ENCODE measurements at regions of chr9 and their contacts with region 1.

Region 1: GRCh38 chr9:127916665-127917613 is at the start of gene ST6GALNAC4:
- DNase-seq: peak; percentile 90 to 94 (median 91)
- H3K4me3 ChIP-seq: peak within 1 kb of the TSS; percentile 54 to 92 (median 55)
- H3K4me3 Mint-ChIP-seq: peak within 1 kb of the TSS; percentile 81 to 86
- H3K27ac ChIP-seq: peak within 1 kb of the TSS; percentile 85 to 93
- H3K27ac Mint-ChIP-seq: peak within 1 kb of the TSS; percentile 81 to 100 (median 97)
- H3K4me1 ChIP-seq: peaks cover 56 to 66% of the 10 kb centered on the region in 2 donors
- H3K4me1 Mint-ChIP-seq: peaks cover 64% of the 10 kb centered on the region
- H3K27me3 ChIP-seq: peaks cover 0 to 3% of the 10 kb centered on the region in 2 donors
- H3K27me3 Mint-ChIP-seq: peaks cover 3 to 13% (median 7%) of the 10 kb centered on the region in 3 donors
- CTCF ChIP-seq: no peak
- polyA plus RNA-seq, gene ST6GALNAC4: 8.9 to 14.0 (median 10.3) TPM

Region 2: DNA sequence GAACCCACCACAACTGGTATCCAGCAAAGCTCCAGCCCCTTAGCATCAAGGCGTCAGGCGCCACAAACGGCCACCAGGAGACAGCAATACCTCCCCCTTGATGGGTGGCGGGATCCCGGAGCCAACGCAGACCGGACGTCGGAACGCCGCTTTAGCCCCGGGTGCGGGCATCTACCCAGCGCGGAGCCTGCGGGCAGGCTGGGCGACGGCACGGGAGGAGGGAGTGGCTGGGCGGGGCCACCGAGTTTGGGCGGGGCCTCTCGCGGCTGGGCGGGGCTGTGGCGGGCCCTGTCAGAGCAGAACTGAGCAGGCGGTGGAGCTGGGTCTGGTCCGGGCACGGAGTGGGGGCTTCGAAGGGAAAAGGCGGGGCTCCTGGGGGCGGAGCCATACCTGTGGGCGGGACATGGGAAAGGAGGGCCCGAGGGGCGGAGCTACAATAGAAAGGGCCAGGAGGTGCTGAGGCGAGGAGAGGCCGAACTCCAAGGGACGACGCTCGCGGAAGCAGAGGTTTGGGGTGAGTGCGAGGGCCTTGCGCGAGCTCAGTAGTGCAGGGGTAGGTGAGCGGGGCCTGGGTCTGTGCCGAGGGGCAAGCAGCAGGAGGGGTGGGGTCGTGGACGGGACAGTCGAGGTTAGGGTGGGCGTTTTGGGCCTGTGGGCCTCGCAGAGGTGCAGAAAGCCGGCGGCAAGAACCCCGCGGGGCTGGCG is 692.6 kb before region 1 on chr9:
- intact Hi-C with region 1: loop called in 1 of 2 experiments (anchors 5 kb)
- DNase-seq: peak; percentile 63 to 75 (median 72)
- H3K4me3 ChIP-seq: peak overlapping the region; percentile 28 to 77 (median 50)
- H3K4me3 Mint-ChIP-seq: peak overlapping the region; percentile 81 to 85
- H3K27ac ChIP-seq: peak overlapping the region in 1 of 2 donors; percentile 39
- H3K27ac Mint-ChIP-seq: peak overlapping the region in 6 of 7 donors; percentile 76 to 91 (median 82)
- H3K4me1 ChIP-seq: peaks cover 17 to 25% of the 10 kb centered on the region in 2 donors
- H3K4me1 Mint-ChIP-seq: peaks cover 21% of the 10 kb centered on the region
- H3K27me3 ChIP-seq: peaks cover 15 to 35% of the 10 kb centered on the region in 2 donors
- H3K27me3 Mint-ChIP-seq: peaks cover 37 to 51% (median 43%) of the 10 kb centered on the region in 3 donors
- CTCF ChIP-seq: no peak

Region 3: GRCh38 chr9:127561619-127562500 is 355.1 kb before region 1 on chr9:
- intact Hi-C with region 1: loop called in 1 of 2 experiments (anchors 5 kb)
- DNase-seq: peak; percentile 97 to 99 (median 98)
- H3K4me3 ChIP-seq: peak overlapping the region in 1 of 3 experiments; percentile 62
- H3K4me3 Mint-ChIP-seq: peak overlapping the region; percentile 63 to 80
- H3K27ac ChIP-seq: peak overlapping the region; percentile 75 to 94
- H3K27ac Mint-ChIP-seq: peak overlapping the region; percentile 95 to 100 (median 98)
- H3K4me1 ChIP-seq: peaks cover 93 to 98% of the 10 kb centered on the region in 2 donors
- H3K4me1 Mint-ChIP-seq: peaks cover 96% of the 10 kb centered on the region
- H3K27me3 ChIP-seq: no peaks in the 10 kb centered on the region
- H3K27me3 Mint-ChIP-seq: peaks cover 0 to 3% (median 3%) of the 10 kb centered on the region in 3 donors
- CTCF ChIP-seq: no peak

Region 4: DNA sequence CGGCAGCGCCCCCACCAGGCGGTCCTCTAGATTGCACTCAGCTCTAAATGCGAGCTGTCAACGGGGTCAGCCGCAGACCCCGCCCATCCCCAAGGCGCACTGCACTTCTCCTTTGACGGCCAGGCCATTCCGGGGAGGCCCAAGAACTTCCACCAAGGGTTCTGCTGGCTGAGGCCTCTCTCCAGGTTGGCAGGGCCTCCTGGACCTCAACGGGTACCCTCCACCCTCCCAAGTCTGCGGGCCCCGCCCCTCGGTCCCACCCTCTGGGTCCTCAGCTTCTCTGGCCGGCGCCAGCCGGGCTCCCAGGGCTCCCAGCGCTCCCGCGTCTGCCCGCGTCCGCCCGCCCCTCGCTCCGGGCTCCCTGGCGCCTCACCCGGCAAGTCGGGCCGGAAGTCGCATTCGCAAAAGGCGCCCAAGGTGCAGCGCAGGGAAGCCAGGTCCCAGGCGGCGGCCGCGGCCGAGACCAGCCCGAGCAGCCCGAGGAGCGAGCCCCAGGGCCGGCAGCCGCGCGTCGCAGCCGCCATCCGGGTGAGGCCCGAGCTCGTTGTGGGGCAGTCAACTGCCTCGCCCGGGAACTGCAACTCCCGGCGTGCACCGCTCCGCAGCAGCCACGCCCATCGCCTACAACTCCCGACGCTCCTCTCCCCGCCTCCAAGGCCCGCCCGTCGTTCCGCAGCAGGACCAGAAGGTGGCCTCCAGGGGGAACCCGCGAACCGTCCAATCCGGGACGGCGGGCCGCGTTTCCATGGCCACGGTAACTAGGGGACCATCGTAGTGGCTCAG is 182.0 kb before region 1 on chr9 and contains the start of gene TOR2A:
- intact Hi-C with region 1: loop called (anchors 1 to 5 kb)
- DNase-seq: peak; percentile 97 to 99 (median 98)
- H3K4me3 ChIP-seq: peak within 1 kb of the TSS; percentile 46 to 76 (median 54)
- H3K4me3 Mint-ChIP-seq: peak within 1 kb of the TSS; percentile 75 to 81
- H3K27ac ChIP-seq: peak within 1 kb of the TSS; percentile 76 to 90
- H3K27ac Mint-ChIP-seq: peak within 1 kb of the TSS; percentile 90 to 95 (median 93)
- H3K4me1 ChIP-seq: peaks cover 19 to 25% of the 10 kb centered on the region in 2 donors
- H3K4me1 Mint-ChIP-seq: peaks cover 17% of the 10 kb centered on the region
- H3K27me3 ChIP-seq: no peaks in the 10 kb centered on the region
- H3K27me3 Mint-ChIP-seq: peaks cover 0 to 3% (median 0%) of the 10 kb centered on the region in 3 donors
- CTCF ChIP-seq: peak; percentile 82
- polyA plus RNA-seq, gene TOR2A: 57.4 to 63.8 (median 60.0) TPM

Region 5: DNA sequence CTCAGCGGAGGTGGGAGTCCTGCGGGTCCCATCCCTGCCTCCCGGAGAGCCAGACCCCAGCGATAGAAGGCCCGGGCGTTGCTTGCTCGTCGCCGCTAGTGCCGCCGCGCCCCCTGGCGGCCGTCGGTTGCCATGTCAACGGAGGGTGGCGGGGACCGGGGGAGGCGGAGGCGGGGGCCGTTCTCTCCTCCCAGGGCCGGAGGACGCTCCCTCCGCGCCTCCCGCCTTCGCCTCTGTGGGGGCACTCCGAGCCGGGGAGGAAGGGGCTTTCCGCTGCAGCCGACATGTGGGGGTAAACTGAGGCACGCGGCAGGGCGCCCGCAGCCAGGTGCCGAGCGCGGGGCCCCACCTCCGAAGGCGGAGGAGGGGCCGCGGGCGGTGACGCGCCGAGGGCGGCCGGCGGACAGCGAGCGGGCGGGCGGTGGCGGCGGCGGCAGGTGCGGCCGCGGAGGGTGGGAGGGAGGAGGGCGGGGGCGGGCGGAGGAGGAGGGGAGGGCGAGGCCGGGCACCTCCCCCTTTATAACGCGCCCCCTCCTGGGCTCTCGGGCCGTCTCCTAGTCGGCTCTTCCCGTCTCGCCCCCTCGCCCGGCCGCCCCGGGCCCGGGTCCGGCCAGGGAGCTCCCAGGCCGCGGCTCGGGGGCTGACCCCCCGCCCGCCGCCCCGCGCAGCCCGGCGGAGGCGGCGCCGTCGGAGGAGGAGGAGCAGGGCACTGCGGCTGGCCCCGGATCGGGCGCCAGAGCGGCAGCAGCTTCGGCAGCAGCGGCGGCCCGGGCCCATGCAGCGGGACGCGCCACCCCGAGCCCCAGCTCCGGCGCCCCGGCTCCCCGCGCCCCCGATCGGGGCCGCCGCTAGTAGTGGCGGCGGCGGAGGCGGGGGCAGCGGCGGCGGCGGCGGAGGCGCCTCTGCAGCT is 131.7 kb before region 1 on chr9:
- intact Hi-C with region 1: loop called in 1 of 2 experiments (anchors 5 kb)
- DNase-seq: peak; percentile 75 to 86 (median 83)
- H3K4me3 ChIP-seq: peak overlapping the region; percentile 40 to 98 (median 96)
- H3K4me3 Mint-ChIP-seq: peak overlapping the region; percentile 53 to 70
- H3K27ac ChIP-seq: peak overlapping the region; percentile 96 to 97
- H3K27ac Mint-ChIP-seq: peak overlapping the region; percentile 93 to 99 (median 98)
- H3K4me1 ChIP-seq: peaks cover 58 to 64% of the 10 kb centered on the region in 2 donors
- H3K4me1 Mint-ChIP-seq: peaks cover 61% of the 10 kb centered on the region
- H3K27me3 ChIP-seq: no peaks in the 10 kb centered on the region
- H3K27me3 Mint-ChIP-seq: peaks cover 0 to 9% (median 0%) of the 10 kb centered on the region in 3 donors
- CTCF ChIP-seq: peak; percentile 91

Region 6: GRCh38 chr9:127884427-127884911 is 32.5 kb before region 1 on chr9:
- intact Hi-C with region 1: loop called in 1 of 2 experiments (anchors 5 kb)
- DNase-seq: no peak
- H3K4me3 ChIP-seq: no peak overlapping the region
- H3K4me3 Mint-ChIP-seq: no peak overlapping the region
- H3K27ac ChIP-seq: no peak overlapping the region
- H3K27ac Mint-ChIP-seq: peak overlapping the region in 1 of 7 donors; percentile 60
- H3K4me1 ChIP-seq: no peaks in the 10 kb centered on the region
- H3K4me1 Mint-ChIP-seq: peaks cover 8% of the 10 kb centered on the region
- H3K27me3 ChIP-seq: no peaks in the 10 kb centered on the region
- H3K27me3 Mint-ChIP-seq: peaks cover 2 to 5% (median 3%) of the 10 kb centered on the region in 3 donors
- CTCF ChIP-seq: no peak

Region 7: GRCh38 chr9:127937388-127938280 is 20.7 kb after region 1 on chr9 and contains the start of gene DPM2:
- intact Hi-C with region 1: no loop called
- DNase-seq: peak; percentile 65 to 73 (median 72)
- H3K4me3 ChIP-seq: peak within 1 kb of the TSS; percentile 56 to 89 (median 69)
- H3K4me3 Mint-ChIP-seq: peak within 1 kb of the TSS; percentile 95 to 100
- H3K27ac ChIP-seq: peak within 1 kb of the TSS; percentile 20 to 84
- H3K27ac Mint-ChIP-seq: peak within 1 kb of the TSS; percentile 86 to 96 (median 93)
- H3K4me1 ChIP-seq: peaks cover 27 to 33% of the 10 kb centered on the region in 2 donors
- H3K4me1 Mint-ChIP-seq: peaks cover 39% of the 10 kb centered on the region
- H3K27me3 ChIP-seq: no peaks in the 10 kb centered on the region
- H3K27me3 Mint-ChIP-seq: peaks cover 0 to 6% (median 3%) of the 10 kb centered on the region in 3 donors
- CTCF ChIP-seq: no peak
- polyA plus RNA-seq, gene DPM2: 22.4 to 28.7 (median 25.4) TPM

Region 8: GRCh38 chr9:128034821-128035764 is 118.2 kb after region 1 on chr9:
- intact Hi-C with region 1: no loop called
- DNase-seq: peak; percentile 57 to 71 (median 69)
- H3K4me3 ChIP-seq: no peak overlapping the region
- H3K4me3 Mint-ChIP-seq: no peak overlapping the region
- H3K27ac ChIP-seq: no peak overlapping the region
- H3K27ac Mint-ChIP-seq: no peak overlapping the region
- H3K4me1 ChIP-seq: no peaks in the 10 kb centered on the region
- H3K4me1 Mint-ChIP-seq: peaks cover 8% of the 10 kb centered on the region
- H3K27me3 ChIP-seq: no peaks in the 10 kb centered on the region
- H3K27me3 Mint-ChIP-seq: peaks cover 0 to 5% (median 0%) of the 10 kb centered on the region in 3 donors
- CTCF ChIP-seq: peak; percentile 94